Caco-2 (cell line): ENCODE measurements at regions of chr3 and their contacts with region 1.

Region 1: GRCh38 chr3:196948442-196949284 is 6.3 kb upstream of the NCBP2 start:
- DNase-seq: peak in 1 of 2 experiments; percentile 57
- H3K4me3 ChIP-seq: no peak overlapping the region
- H3K4me3 Mint-ChIP-seq: no peak overlapping the region
- H3K27ac Mint-ChIP-seq: no peak overlapping the region
- H3K4me1 ChIP-seq: peaks cover under 1% of the 10 kb centered on the region; the same call in 1 of the 2 replicates
- H3K4me1 Mint-ChIP-seq: no peaks in the 10 kb centered on the region
- H3K27me3 ChIP-seq: no peaks in the 10 kb centered on the region
- H3K27me3 Mint-ChIP-seq: no peaks in the 10 kb centered on the region
- CTCF ChIP-seq: peak; percentile 26 to 28

Region 2: DNA sequence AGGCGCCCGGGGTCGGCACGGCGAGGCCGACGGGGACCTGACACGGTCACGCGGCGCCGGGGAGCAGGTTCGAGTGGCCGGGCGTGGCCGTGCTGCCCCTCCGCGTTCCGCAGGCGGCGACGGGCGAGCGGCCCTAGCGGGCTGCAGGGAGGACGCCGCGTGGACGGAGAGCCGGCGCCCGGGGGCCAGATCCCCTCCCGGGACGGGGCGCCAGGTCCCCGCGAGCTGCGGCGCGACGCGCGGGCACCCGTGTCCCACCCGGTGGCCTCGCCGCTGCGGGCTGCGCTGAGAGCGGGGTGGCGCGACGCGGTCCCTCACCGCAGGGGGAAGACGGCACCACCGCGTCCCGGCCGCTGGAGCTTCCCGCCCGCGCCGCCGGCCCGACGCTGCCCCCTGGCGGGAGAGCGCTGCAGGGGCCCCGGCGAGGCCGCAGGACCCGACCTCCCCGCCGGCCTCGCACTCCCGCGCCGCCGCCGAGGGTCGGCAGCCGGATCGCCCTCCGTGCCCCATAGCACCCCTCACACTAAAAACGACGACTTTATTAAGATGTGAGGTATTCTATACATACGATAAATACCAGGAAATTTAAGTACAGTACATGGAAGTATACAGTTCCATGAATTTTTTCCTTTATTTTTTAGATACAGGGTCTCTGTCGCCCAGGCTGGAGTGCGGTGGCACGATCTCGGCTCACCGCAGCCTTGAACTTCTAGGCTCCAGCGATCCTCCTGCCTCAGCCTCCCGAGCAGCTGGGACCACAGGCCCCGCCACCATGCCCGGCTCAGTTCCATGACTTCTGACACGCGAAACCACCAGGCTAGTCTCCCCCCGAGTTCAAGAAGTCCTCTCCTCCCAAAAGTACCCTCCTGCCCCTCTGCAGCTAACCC is 21.2 kb after region 1 on chr3:
- CTCF ChIA-PET with region 1: interaction called, 14 read pairs
- POLR2A ChIA-PET with region 1: no interaction called
- intact Hi-C with region 1: loop called (anchors 1 kb)
- DNase-seq: peak in 1 of 2 experiments; percentile 88
- H3K4me3 ChIP-seq: peak overlapping the region; percentile 89
- H3K4me3 Mint-ChIP-seq: peak overlapping the region; percentile 71
- H3K27ac Mint-ChIP-seq: peak overlapping the region; percentile 70
- H3K4me1 ChIP-seq: peaks cover 10% of the 10 kb centered on the region; the same call in 1 of the 2 replicates
- H3K4me1 Mint-ChIP-seq: peaks cover 16% of the 10 kb centered on the region
- H3K27me3 ChIP-seq: no peaks in the 10 kb centered on the region
- H3K27me3 Mint-ChIP-seq: no peaks in the 10 kb centered on the region
- CTCF ChIP-seq: peak; percentile 40 to 89